ENCODE measurements at regions of chr12 and their contacts with region 1.

Region 1: DNA sequence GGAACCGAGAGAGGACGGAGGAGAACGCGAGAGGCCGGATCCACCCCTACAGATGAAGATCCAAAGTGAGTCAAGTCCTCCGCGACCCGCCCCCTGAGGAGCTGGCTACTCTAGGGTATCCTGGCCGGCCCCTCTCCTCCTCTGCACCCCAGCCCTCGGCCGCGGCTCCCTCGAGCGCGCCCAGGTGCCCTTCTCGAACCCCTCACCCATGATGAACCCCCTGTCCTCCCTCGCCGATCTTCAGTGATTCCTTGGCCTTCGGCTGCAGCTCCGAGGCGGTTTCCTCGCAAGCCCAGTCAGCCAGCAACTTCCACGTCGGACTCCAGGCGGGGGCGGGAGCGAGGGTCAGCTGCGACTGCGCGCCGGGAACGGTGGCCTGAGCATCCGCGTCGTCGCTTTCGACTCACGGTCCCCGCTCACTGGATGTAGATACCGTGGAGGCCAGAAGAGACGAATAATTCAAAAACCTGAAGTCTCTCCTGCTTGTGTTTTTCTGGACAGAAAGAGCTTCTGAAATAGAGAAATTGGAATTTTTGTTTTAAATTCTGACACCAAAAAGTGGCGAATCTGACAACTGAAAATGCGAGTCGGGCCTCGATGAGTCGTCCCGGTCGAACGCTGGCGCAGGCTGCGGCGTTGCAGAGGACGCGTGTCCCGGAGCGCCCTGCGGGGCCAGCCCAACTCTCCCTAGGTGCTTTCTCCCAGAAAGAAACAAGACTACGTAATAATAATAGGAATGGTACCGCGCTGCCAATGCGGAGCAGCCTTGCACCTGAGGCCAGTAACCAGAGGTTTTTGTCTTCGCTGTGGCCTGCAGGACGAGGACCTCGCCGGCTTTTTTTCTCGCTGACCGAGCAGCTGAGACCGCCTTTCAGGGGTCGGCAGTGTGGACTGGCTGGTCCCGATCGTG is at the start of gene ARL1:
- DNase-seq: peak; percentile 83 to 87 (median 86)
- H3K4me3 ChIP-seq: peak within 1 kb of the TSS; percentile 54 to 94 (median 91)
- H3K4me3 Mint-ChIP-seq: peak within 1 kb of the TSS; percentile 99 to 100
- H3K27ac ChIP-seq: peak within 1 kb of the TSS; percentile 82 to 97
- H3K27ac Mint-ChIP-seq: peak within 1 kb of the TSS; percentile 91 to 99 (median 98)
- H3K4me1 ChIP-seq: peaks cover 17 to 22% of the 10 kb centered on the region in 2 donors
- H3K4me1 Mint-ChIP-seq: peaks cover 23% of the 10 kb centered on the region
- H3K27me3 ChIP-seq: no peaks in the 10 kb centered on the region
- H3K27me3 Mint-ChIP-seq: peaks cover 0 to 1% (median 1%) of the 10 kb centered on the region in 3 donors
- CTCF ChIP-seq: no peak
- polyA plus RNA-seq, gene ARL1: 14.7 to 34.8 (median 27.3) TPM

Region 2: GRCh38 chr12:100632445-100632892 is 775.2 kb before region 1 on chr12:
- intact Hi-C with region 1: no loop called
- DNase-seq: no peak
- H3K4me3 ChIP-seq: no peak overlapping the region
- H3K4me3 Mint-ChIP-seq: no peak overlapping the region
- H3K27ac ChIP-seq: no peak overlapping the region
- H3K27ac Mint-ChIP-seq: peak overlapping the region in 1 of 7 donors; percentile 21
- H3K4me1 ChIP-seq: no peaks in the 10 kb centered on the region
- H3K4me1 Mint-ChIP-seq: peaks cover 3% of the 10 kb centered on the region
- H3K27me3 ChIP-seq: no peaks in the 10 kb centered on the region
- H3K27me3 Mint-ChIP-seq: peaks cover 0 to 4% (median 0%) of the 10 kb centered on the region in 3 donors
- CTCF ChIP-seq: no peak

Region 3: DNA sequence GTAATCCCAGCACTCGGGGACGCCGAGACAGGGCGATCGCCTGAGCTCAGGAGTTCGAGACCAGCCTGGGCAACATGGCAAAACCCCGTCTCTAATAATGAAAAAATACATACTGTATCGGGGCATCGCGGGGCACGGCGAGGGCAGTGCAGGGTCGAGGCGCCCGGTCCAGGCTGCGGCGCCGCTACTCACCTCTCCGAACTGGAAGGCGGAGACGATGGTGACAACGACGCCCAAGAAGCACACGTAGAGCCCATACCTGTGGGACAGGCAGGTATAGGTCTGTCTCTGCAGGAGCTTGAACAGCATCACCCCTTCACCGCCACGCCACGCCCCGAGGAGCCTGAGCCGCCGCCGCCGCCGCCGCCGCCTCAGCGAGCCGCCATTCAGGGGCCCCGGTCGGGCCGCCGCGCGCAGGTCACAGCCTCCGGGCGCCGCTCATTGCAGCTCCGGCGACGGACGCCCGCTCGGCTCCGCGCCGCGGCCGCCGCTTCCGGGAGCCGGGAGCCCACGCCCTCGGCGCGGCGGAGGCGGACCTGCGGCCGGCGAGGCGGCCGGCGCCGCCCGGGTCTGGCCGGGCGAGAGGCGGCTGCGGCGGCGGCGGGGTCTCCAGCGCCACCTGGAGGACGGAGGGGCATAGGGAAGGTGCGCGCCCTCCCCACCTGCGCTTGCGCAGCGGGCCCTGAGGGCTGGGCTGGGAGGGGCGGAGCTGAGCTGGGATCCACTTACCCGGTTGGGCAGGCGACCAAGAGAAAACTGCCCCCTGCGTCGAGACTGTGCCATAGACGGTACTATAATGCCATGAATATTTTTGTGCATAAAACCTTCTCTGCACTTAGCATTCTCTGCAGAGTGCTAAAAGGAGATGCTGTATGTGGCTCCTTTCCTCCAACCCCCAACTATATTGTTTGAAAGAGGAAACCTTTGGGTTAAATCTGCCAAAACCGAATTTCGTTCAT is 423.0 kb after region 1 on chr12 and contains the start of gene GNPTAB:
- intact Hi-C with region 1: loop called in 1 of 2 experiments (anchors 10 kb)
- DNase-seq: peak; percentile 89 to 95 (median 93)
- H3K4me3 ChIP-seq: peak within 1 kb of the TSS; percentile 61 to 99 (median 92)
- H3K4me3 Mint-ChIP-seq: peak within 1 kb of the TSS; percentile 97 to 99
- H3K27ac ChIP-seq: peak within 1 kb of the TSS; percentile 46 to 74
- H3K27ac Mint-ChIP-seq: peak within 1 kb of the TSS; percentile 78 to 91 (median 88)
- H3K4me1 ChIP-seq: peaks cover 23 to 48% of the 10 kb centered on the region in 2 donors
- H3K4me1 Mint-ChIP-seq: peaks cover 47% of the 10 kb centered on the region
- H3K27me3 ChIP-seq: no peaks in the 10 kb centered on the region
- H3K27me3 Mint-ChIP-seq: peaks cover 0 to 1% (median 0%) of the 10 kb centered on the region in 3 donors
- CTCF ChIP-seq: peak; percentile 69
- polyA plus RNA-seq, gene GNPTAB: 14.4 to 29.1 (median 24.1) TPM

Measured in CD14-positive monocyte (primary cell).